Endothelial cell of umbilical vein (primary cell): ENCODE measurements at regions of chr1 and their contacts with region 1.

Region 1: GRCh38 chr1:3069491-3070303 is 694 bp downstream of the PRDM16 start:
- DNase-seq: peak; percentile 17
- H3K4me3 ChIP-seq: peak overlapping the region; percentile 38 to 54 (median 41)
- H3K27ac ChIP-seq: no peak overlapping the region
- H3K4me1 ChIP-seq: no peaks in the 10 kb centered on the region
- H3K27me3 ChIP-seq: peaks cover 60 to 77% of the 10 kb centered on the region in 2 experiments
- CTCF ChIP-seq: peak in 1 of 2 donors; percentile 5
- POLR2A ChIP-seq: no peak

Region 2: DNA sequence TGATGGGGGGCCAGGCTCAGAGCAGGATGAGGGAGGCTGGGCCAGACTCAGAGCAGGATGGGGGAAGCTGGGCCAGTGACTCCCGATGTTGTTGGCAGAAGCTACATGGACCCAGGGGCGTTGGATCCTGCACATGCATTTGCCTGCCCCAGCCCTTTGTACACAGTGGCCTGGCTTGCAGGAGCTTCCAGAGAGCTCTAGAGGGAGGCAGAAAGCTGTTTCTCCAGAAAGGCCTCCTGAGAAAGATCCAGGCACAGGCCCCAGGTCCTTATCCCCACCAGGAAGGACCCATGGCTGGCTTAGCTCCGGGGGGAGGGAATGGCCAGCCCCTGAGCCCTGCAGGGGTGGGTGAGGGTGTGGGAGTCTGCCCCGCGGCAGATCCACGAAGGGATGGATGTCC is 155.0 kb before region 1 on chr1:
- CTCF ChIA-PET with region 1: no interaction called
- POLR2A ChIA-PET with region 1: no interaction called
- dilution Hi-C with region 1: no loop called
- intact Hi-C with region 1: no loop called
- DNase-seq: no peak
- H3K4me3 ChIP-seq: no peak overlapping the region
- H3K27ac ChIP-seq: no peak overlapping the region
- H3K4me1 ChIP-seq: no peaks in the 10 kb centered on the region
- H3K27me3 ChIP-seq: no peaks in the 10 kb centered on the region
- CTCF ChIP-seq: no peak
- POLR2A ChIP-seq: no peak

Region 3: DNA sequence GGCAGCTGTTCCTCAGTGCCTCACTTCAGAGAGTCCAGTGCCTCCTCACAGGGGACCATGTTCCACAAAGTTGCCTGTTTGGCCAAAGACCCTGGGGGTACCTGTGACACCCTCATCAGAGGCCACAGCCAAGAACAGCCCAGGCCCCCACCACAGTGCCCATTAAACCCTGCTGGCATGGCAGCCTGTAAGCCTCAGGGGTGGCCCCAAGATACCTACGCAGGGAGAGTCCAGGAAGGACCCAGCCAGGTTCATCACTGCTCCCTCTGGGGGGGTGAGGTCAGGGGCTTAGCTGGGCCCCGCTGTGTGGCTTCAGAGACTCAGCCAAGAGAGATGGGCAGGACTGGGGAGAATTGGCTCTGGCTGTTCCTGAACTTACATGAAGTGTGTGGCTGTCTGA is 19.8 kb before region 1 on chr1:
- CTCF ChIA-PET with region 1: no interaction called
- POLR2A ChIA-PET with region 1: no interaction called
- dilution Hi-C with region 1: no loop called
- intact Hi-C with region 1: no loop called
- DNase-seq: no peak
- H3K4me3 ChIP-seq: no peak overlapping the region
- H3K27ac ChIP-seq: no peak overlapping the region
- H3K4me1 ChIP-seq: no peaks in the 10 kb centered on the region
- H3K27me3 ChIP-seq: no peaks in the 10 kb centered on the region
- CTCF ChIP-seq: no peak
- POLR2A ChIP-seq: no peak

Region 4: DNA sequence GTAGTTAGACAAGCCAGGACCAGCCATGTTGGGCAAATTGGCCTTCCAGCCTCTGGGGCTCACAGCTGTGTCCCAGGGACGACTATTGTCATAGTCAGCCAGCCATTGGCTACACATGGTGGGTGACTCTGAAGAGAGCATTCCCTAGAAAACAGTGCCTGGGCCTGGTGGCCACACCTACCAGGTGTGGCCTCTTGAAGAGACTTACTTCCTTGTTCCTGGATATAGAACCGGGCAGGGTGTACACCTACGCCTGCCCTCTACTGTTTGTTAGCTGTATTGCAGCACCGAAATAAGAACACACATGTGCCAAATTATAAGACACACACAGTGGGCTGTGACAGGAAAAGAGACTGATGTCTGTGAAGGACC is 250.2 kb after region 1 on chr1:
- CTCF ChIA-PET with region 1: no interaction called
- POLR2A ChIA-PET with region 1: no interaction called
- dilution Hi-C with region 1: no loop called
- intact Hi-C with region 1: loop called (anchors 10 kb)
- DNase-seq: peak; percentile 32
- H3K4me3 ChIP-seq: no peak overlapping the region
- H3K27ac ChIP-seq: no peak overlapping the region
- H3K4me1 ChIP-seq: no peaks in the 10 kb centered on the region
- H3K27me3 ChIP-seq: peaks cover 0 to 7% of the 10 kb centered on the region in 2 experiments
- CTCF ChIP-seq: peak; percentile 44 to 49
- POLR2A ChIP-seq: no peak

Region 5: GRCh38 chr1:3423245-3423829 is 353.6 kb after region 1 on chr1:
- CTCF ChIA-PET with region 1: interaction called, 4 read pairs
- POLR2A ChIA-PET with region 1: no interaction called
- dilution Hi-C with region 1: no loop called
- intact Hi-C with region 1: loop called (anchors 1 kb)
- DNase-seq: no peak
- H3K4me3 ChIP-seq: no peak overlapping the region
- H3K27ac ChIP-seq: no peak overlapping the region
- H3K4me1 ChIP-seq: no peaks in the 10 kb centered on the region
- H3K27me3 ChIP-seq: no peaks in the 10 kb centered on the region
- CTCF ChIP-seq: no peak
- POLR2A ChIP-seq: no peak